ENCODE measurements at regions of chr11 and their contacts with region 1.

Region 1: GRCh38 chr11:98358551-98358950 is 662.2 kb upstream of the CNTN5 start:
- DNase-seq: no peak
- H3K4me3 ChIP-seq: no peak overlapping the region
- H3K27ac ChIP-seq: no peak overlapping the region
- H3K4me1 ChIP-seq: no peaks in the 10 kb centered on the region
- H3K27me3 ChIP-seq: no peaks in the 10 kb centered on the region
- CTCF ChIP-seq: no peak
- POLR2A ChIP-seq: no peak

Region 2: DNA sequence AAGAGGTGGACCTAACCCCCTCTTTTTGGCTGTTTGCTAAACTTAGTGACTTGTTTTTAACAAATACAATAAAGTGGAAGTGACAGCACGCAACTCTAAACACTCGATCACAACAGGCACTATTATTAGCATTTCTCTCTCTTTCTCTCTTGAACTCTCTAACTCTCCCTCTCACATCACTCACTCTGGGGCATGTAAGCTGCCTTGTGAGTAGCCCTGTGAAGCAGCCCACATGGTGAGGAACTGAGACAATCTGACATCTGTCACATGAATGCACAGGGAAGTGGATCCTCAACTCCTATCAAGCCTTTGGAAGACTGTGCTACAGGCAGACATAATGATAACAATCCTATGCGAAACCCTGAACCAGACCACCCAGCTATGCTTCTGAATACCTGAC is 53.2 kb after region 1 on chr11:
- intact Hi-C with region 1: loop called (anchors 2 kb)
- DNase-seq: no peak
- H3K4me3 ChIP-seq: no peak overlapping the region
- H3K27ac ChIP-seq: no peak overlapping the region
- H3K4me1 ChIP-seq: no peaks in the 10 kb centered on the region
- H3K27me3 ChIP-seq: no peaks in the 10 kb centered on the region
- CTCF ChIP-seq: no peak
- POLR2A ChIP-seq: no peak